ENCODE measurements at regions of chr3 and their contacts with region 1.

Region 1: DNA sequence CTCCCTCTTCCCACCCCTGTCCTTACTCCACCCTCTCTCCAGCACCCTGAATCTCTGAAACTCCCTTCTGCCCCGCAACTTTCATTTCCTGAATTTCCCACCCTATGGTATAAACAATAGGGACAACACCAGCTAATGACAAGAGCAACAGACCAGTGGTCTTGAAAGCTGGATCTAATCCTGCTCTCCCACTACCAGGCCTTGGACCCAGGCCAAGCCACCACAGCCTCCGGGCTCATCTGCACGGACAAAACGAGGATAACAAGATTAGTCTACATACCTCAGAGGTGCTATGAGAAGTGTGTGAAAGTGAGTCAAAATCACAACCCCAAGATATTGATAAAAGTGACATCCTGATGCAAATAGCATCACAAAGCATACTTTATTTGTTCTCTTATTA is 128.6 kb downstream of the ERC2 start:
- DNase-seq: no peak
- ATAC-seq: no peak
- H3K4me3 ChIP-seq: no peak overlapping the region
- H3K27ac ChIP-seq: no peak overlapping the region
- H3K4me1 ChIP-seq: no peaks in the 10 kb centered on the region
- H3K27me3 ChIP-seq: peaks cover 0 to 1% of the 10 kb centered on the region in 2 experiments; a peak in 1 of 4 replicates
- CTCF ChIP-seq: no peak
- EP300 ChIP-seq: no peak
- POLR2A ChIP-seq: no peak
- RAD21 ChIP-seq: no peak

Region 2: DNA sequence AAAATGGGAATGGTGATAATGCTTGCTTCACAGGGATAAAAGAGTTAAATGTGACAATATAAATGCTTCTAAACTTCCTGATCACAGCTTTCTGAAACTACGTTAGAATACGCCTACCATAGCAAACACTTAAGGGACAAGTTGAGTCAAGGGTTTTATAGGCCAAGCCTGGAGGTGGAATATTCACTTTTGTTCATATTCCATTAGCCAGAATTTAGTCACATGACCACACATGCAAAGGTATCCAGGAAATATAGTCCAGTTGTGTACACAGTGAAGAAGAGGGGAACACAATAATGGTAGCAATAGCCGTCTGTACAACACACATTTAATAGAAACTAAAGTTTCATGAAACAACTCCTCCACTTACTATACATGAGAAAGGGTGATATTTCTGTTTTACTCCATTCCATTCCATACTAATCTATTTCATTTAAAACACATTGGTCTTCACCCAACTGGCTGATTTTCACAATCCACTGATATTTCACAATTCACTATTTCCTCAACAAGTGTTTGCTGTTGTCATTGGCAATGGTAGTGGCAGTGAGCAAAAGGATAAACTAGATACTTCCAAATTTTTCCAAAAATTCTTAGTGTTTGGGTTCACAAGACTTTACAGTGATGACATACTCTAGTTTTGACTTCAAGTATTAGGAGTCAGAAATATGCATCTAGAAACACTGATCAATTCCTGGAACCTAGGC is 142.3 kb before region 1 on chr3:
- CTCF ChIA-PET with region 1: no interaction called
- POLR2A ChIA-PET with region 1: no interaction called
- RAD21 ChIA-PET with region 1: no interaction called
- SMC1A ChIA-PET with region 1: no interaction called
- in situ Hi-C with region 1: no loop called
- intact Hi-C with region 1: no loop called
- DNase-seq: no peak
- ATAC-seq: no peak
- H3K4me3 ChIP-seq: no peak overlapping the region
- H3K27ac ChIP-seq: no peak overlapping the region
- H3K4me1 ChIP-seq: no peaks in the 10 kb centered on the region
- H3K27me3 ChIP-seq: no peaks in the 10 kb centered on the region
- CTCF ChIP-seq: no peak
- EP300 ChIP-seq: no peak
- POLR2A ChIP-seq: no peak
- RAD21 ChIP-seq: no peak

Region 3: DNA sequence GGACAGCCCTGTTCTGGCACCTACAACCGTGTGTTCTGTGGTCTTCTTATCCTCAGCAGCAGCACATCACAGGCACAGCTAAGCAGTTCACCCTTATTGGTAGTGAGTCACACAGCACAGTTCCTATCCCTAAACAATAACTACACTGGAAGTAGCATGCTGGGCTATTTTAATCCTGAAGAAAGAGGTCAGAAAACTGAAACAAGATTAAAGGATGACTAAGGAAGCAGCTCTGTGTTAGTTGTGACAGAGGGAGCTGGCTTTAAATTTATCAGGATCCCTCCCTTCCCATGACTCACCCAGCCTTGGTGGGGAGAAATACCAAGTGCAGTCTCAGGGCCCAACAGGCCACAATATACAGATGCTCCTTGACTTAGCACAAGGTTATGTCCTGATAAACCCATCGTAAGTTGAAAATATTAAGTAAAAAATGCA is 15.7 kb before region 1 on chr3:
- CTCF ChIA-PET with region 1: interaction called, 12 read pairs
- POLR2A ChIA-PET with region 1: no interaction called
- RAD21 ChIA-PET with region 1: no interaction called
- SMC1A ChIA-PET with region 1: interaction called, 4 read pairs
- in situ Hi-C with region 1: no loop called
- intact Hi-C with region 1: no loop called
- DNase-seq: no peak
- ATAC-seq: no peak
- H3K4me3 ChIP-seq: no peak overlapping the region
- H3K27ac ChIP-seq: no peak overlapping the region
- H3K4me1 ChIP-seq: no peaks in the 10 kb centered on the region
- H3K27me3 ChIP-seq: no peaks in the 10 kb centered on the region; a peak in 1 of 4 replicates
- CTCF ChIP-seq: no peak
- EP300 ChIP-seq: no peak
- POLR2A ChIP-seq: no peak
- RAD21 ChIP-seq: no peak

Region 4: DNA sequence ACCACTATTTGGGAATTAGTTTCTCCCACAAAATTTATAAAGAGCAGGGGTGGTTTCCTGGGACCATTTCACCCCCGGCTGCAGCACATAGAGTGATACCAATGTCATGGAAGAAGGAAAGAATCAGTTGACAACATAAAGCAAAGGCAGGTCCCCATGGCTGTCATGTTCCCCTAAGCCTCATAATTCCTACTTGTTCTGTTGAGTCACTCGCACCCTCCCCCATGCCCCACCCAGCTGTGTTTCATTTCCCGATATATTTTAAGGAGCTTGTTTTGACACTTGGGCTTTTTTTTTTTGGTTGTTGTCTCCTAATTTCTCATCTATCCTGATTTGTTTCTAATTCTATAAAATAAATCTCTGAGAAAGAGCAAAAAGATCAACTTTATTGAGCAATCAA is 103.7 kb after region 1 on chr3:
- CTCF ChIA-PET with region 1: interaction called, 57 read pairs
- POLR2A ChIA-PET with region 1: interaction called, 6 read pairs
- RAD21 ChIA-PET with region 1: no interaction called
- SMC1A ChIA-PET with region 1: interaction called, 9 read pairs
- in situ Hi-C with region 1: loop called (anchors 5 kb)
- intact Hi-C with region 1: loop called (anchors 1 kb)
- DNase-seq: no peak
- ATAC-seq: no peak
- H3K4me3 ChIP-seq: no peak overlapping the region
- H3K27ac ChIP-seq: no peak overlapping the region
- H3K4me1 ChIP-seq: no peaks in the 10 kb centered on the region
- H3K27me3 ChIP-seq: no peaks in the 10 kb centered on the region
- CTCF ChIP-seq: no peak
- EP300 ChIP-seq: no peak
- POLR2A ChIP-seq: no peak
- RAD21 ChIP-seq: no peak

Region 5: GRCh38 chr3:56494686-56495322 is 155.1 kb after region 1 on chr3:
- CTCF ChIA-PET with region 1: interaction called, 13 read pairs
- POLR2A ChIA-PET with region 1: interaction called, 3 read pairs
- RAD21 ChIA-PET with region 1: interaction called, 6 read pairs
- SMC1A ChIA-PET with region 1: no interaction called
- in situ Hi-C with region 1: no loop called
- intact Hi-C with region 1: loop called (anchors 5 kb)
- DNase-seq: peak; percentile 23
- ATAC-seq: peak; percentile 94
- H3K4me3 ChIP-seq: no peak overlapping the region
- H3K27ac ChIP-seq: no peak overlapping the region
- H3K4me1 ChIP-seq: no peaks in the 10 kb centered on the region
- H3K27me3 ChIP-seq: no peaks in the 10 kb centered on the region
- CTCF ChIP-seq: peak; percentile 93 to 99 (median 98)
- EP300 ChIP-seq: no peak
- POLR2A ChIP-seq: no peak
- RAD21 ChIP-seq: peak; percentile 74

Region 6: GRCh38 chr3:56939834-56940233 is 600.2 kb after region 1 on chr3:
- CTCF ChIA-PET with region 1: no interaction called
- POLR2A ChIA-PET with region 1: no interaction called
- RAD21 ChIA-PET with region 1: no interaction called
- SMC1A ChIA-PET with region 1: no interaction called
- in situ Hi-C with region 1: no loop called
- intact Hi-C with region 1: no loop called
- DNase-seq: no peak
- ATAC-seq: no peak
- H3K4me3 ChIP-seq: no peak overlapping the region
- H3K27ac ChIP-seq: no peak overlapping the region
- H3K4me1 ChIP-seq: peaks cover 10% of the 10 kb centered on the region
- H3K27me3 ChIP-seq: no peaks in the 10 kb centered on the region
- CTCF ChIP-seq: no peak
- EP300 ChIP-seq: no peak
- POLR2A ChIP-seq: no peak
- RAD21 ChIP-seq: no peak